CD4-positive, alpha-beta memory T cell (primary cell): ENCODE measurements at regions of chr1 and their contacts with region 1.

Region 1: DNA sequence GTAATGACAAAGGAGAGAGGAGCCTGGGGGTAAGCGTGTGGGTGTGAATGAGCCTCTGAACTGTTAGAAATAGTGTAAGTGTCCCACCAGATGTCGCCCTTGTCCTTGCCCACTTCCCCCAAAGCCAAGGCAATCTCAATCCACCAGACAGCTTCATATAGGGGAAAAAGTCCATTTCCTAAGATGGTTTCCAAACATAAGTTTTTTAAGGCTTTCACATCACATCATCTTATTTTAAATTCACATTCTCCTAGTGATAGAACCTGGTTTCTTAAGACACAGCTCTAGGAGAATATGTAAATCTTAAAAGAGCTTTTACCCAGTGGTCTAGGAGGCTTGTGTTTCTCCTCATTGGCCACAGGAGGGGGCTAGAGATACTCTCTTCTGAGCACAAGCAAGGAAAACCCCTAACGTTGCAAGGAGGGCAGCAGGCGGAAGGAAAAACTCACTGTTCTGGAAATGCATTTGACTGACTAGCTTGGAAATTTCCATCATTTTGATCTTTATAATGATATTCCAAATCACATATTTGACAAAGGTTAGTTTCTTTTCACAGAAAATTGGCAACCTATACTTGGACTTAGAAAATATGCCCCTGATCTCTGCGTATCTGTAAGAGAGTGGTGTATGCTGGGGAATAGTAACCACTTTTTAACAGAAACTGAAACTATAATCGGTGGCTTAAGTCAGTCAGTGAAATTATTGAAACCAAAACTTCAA is 51.9 kb upstream of the LPAR3 start:
- DNase-seq: peak; percentile 89 to 94 (median 91)
- H3K4me3 ChIP-seq: peak overlapping the region; percentile 55 to 82
- H3K4me3 Mint-ChIP-seq: peak overlapping the region; percentile 85 to 97 (median 90)
- H3K27ac ChIP-seq: peak overlapping the region; percentile 81
- H3K27ac Mint-ChIP-seq: peak overlapping the region; percentile 92 to 100 (median 97)
- H3K4me1 ChIP-seq: peaks cover 5% of the 10 kb centered on the region
- H3K4me1 Mint-ChIP-seq: peaks cover 5 to 15% (median 11%) of the 10 kb centered on the region in 4 donors
- H3K27me3 ChIP-seq: no peaks in the 10 kb centered on the region
- H3K27me3 Mint-ChIP-seq: no peaks in the 10 kb centered on the region

Region 2: DNA sequence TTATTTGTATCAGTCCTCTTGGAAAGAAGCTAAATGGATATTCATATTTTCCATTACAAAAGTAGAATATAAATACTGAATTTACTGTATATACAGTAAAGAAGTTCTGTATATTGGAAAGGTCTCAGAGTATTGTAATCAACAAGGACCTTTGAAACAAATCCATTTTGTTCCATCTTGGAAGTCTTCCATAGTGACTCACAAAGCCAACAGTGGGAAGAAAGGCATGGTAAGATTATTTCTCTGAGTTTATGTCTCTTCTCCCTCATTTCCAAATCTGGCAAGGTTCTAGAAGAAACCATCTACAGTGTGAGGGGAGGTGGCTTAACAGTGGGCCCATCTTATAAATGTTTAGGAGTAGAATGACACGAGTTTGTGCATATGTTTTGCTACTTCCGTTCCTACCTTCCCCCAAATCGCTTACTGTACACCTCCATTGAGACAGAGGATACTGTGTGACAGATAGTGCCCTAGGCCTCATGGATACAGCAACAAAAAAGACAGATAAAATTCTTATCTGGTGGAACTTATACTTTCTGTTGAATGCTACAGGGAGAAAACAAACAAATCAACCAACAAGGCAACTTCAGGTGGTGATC is 232.6 kb before region 1 on chr1:
- CTCF ChIA-PET with region 1: no interaction called
- POLR2A ChIA-PET with region 1: no interaction called
- intact Hi-C with region 1: no loop called
- DNase-seq: no peak
- H3K4me3 ChIP-seq: no peak overlapping the region
- H3K4me3 Mint-ChIP-seq: no peak overlapping the region
- H3K27ac ChIP-seq: no peak overlapping the region
- H3K27ac Mint-ChIP-seq: no peak overlapping the region
- H3K4me1 ChIP-seq: no peaks in the 10 kb centered on the region
- H3K4me1 Mint-ChIP-seq: peaks cover 0 to 2% (median 0%) of the 10 kb centered on the region in 4 donors
- H3K27me3 ChIP-seq: no peaks in the 10 kb centered on the region
- H3K27me3 Mint-ChIP-seq: peaks cover 0 to 7% of the 10 kb centered on the region in 2 donors

Region 3: DNA sequence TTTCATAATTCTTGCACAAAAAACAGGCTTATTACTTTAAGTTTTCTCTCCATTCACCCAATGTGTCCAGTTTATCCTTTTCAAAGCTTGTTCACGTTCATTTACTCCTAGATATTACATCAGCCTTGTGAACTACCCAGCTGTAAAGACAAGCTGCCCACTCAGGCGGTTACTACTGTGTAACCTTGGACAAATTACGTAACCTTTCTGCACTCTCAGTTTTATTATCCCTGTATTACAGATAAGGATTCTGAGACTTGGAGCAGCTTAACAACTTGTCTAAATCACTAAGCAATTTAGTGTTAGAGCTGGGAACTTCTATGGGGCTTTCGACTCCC is 31.4 kb before region 1 on chr1:
- CTCF ChIA-PET with region 1: no interaction called
- POLR2A ChIA-PET with region 1: no interaction called
- intact Hi-C with region 1: no loop called
- DNase-seq: no peak
- H3K4me3 ChIP-seq: no peak overlapping the region
- H3K4me3 Mint-ChIP-seq: no peak overlapping the region
- H3K27ac ChIP-seq: no peak overlapping the region
- H3K27ac Mint-ChIP-seq: no peak overlapping the region
- H3K4me1 ChIP-seq: no peaks in the 10 kb centered on the region
- H3K4me1 Mint-ChIP-seq: no peaks in the 10 kb centered on the region
- H3K27me3 ChIP-seq: no peaks in the 10 kb centered on the region
- H3K27me3 Mint-ChIP-seq: peaks cover 0 to 4% of the 10 kb centered on the region in 2 donors

Region 4: GRCh38 chr1:84959294-84959693 is 14.4 kb after region 1 on chr1:
- CTCF ChIA-PET with region 1: interaction called, 36 read pairs
- POLR2A ChIA-PET with region 1: interaction called, 3 read pairs
- intact Hi-C with region 1: no loop called
- DNase-seq: peak in 3 of 5 donors; percentile 9 to 58 (median 44)
- H3K4me3 ChIP-seq: no peak overlapping the region
- H3K4me3 Mint-ChIP-seq: no peak overlapping the region
- H3K27ac ChIP-seq: no peak overlapping the region
- H3K27ac Mint-ChIP-seq: peak overlapping the region in 3 of 7 donors; percentile 12 to 50 (median 31)
- H3K4me1 ChIP-seq: no peaks in the 10 kb centered on the region
- H3K4me1 Mint-ChIP-seq: peaks cover 3 to 6% (median 5%) of the 10 kb centered on the region in 4 donors
- H3K27me3 ChIP-seq: no peaks in the 10 kb centered on the region
- H3K27me3 Mint-ChIP-seq: peaks cover 0 to 2% of the 10 kb centered on the region in 2 donors

Region 5: DNA sequence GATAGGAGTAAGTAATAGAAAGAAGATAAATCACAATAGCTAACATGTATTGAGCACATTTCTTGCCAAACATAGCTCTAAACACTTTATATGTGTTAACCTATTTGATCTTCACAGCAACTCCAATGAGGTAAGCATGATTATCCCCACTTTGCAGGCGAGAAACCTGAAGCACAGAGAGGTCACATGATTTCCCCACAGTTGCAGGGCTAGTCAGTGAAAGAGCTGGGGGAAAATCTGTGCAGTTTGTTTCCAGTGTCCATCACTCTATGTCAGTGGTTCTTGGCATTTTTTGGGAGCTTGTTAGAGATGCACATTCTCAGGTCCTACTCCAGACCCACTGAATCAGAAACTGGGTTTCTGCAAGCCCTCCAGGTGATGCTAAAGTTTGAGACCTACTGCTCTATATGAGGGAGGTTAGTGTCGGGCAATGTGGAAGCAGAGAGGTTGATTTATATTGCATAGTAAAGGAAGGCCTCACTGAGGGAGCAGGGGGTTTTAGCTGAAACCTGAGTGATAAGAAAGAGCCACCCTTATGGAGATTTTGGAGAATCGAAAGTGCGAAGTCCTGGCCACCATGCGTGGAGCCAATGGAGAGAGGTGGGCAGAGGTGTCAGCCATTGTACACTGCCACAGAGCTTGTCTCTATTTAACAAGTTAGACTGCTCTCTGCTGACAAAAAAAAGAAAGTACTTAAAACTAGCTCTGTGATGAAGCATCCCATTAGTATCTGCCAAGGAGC is 82.5 kb after region 1 on chr1:
- CTCF ChIA-PET with region 1: interaction called, 176 read pairs
- POLR2A ChIA-PET with region 1: interaction called, 45 read pairs
- intact Hi-C with region 1: loop called (anchors 1 kb)
- DNase-seq: peak in 4 of 5 donors; percentile 38 to 47 (median 42)
- H3K4me3 ChIP-seq: no peak overlapping the region
- H3K4me3 Mint-ChIP-seq: peak overlapping the region; percentile 63 to 80 (median 74)
- H3K27ac ChIP-seq: peak overlapping the region; percentile 16
- H3K27ac Mint-ChIP-seq: peak overlapping the region; percentile 60 to 88 (median 79)
- H3K4me1 ChIP-seq: peaks cover 13% of the 10 kb centered on the region
- H3K4me1 Mint-ChIP-seq: peaks cover 6 to 11% (median 8%) of the 10 kb centered on the region in 4 donors
- H3K27me3 ChIP-seq: no peaks in the 10 kb centered on the region
- H3K27me3 Mint-ChIP-seq: no peaks in the 10 kb centered on the region

Region 6: DNA sequence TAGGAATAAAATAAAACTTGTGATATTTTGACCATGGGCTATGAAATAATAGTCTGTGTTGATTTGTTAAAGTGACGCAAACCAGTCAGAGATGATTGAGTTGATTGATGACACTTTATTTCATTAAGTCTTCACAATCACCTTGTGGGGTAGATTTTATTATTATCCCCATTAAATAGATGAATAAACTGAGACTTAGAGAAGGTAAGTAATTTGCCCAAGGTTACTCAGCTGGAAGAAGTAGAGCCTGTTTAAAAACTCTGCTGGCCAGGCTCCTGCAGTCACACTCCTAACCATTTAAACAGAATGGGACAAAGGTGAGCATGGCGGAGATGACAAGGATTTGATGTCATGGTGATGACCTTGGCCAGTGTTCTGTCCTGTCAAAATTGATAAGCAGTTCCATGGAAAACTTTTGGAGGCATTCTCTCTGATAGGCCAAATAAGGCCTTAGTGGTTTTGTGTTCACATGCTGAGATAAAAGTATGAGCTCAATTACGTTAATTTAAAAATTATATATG is 126.1 kb after region 1 on chr1:
- CTCF ChIA-PET with region 1: no interaction called
- POLR2A ChIA-PET with region 1: no interaction called
- intact Hi-C with region 1: no loop called
- DNase-seq: no peak
- H3K4me3 ChIP-seq: no peak overlapping the region
- H3K4me3 Mint-ChIP-seq: no peak overlapping the region
- H3K27ac ChIP-seq: no peak overlapping the region
- H3K27ac Mint-ChIP-seq: no peak overlapping the region
- H3K4me1 ChIP-seq: no peaks in the 10 kb centered on the region
- H3K4me1 Mint-ChIP-seq: peaks cover 4 to 5% (median 5%) of the 10 kb centered on the region in 4 donors
- H3K27me3 ChIP-seq: no peaks in the 10 kb centered on the region
- H3K27me3 Mint-ChIP-seq: peaks cover 0 to 10% of the 10 kb centered on the region in 2 donors

Region 7: GRCh38 chr1:85109475-85109874 is 164.5 kb after region 1 on chr1:
- CTCF ChIA-PET with region 1: interaction called, 6 read pairs
- POLR2A ChIA-PET with region 1: no interaction called
- intact Hi-C with region 1: loop called (anchors 2 kb)
- DNase-seq: peak in 4 of 5 donors; percentile 33 to 44 (median 41)
- H3K4me3 ChIP-seq: no peak overlapping the region
- H3K4me3 Mint-ChIP-seq: no peak overlapping the region
- H3K27ac ChIP-seq: no peak overlapping the region
- H3K27ac Mint-ChIP-seq: peak overlapping the region in 1 of 7 donors; percentile 59
- H3K4me1 ChIP-seq: no peaks in the 10 kb centered on the region
- H3K4me1 Mint-ChIP-seq: no peaks in the 10 kb centered on the region
- H3K27me3 ChIP-seq: no peaks in the 10 kb centered on the region
- H3K27me3 Mint-ChIP-seq: peaks cover 0 to 2% of the 10 kb centered on the region in 2 donors

Region 8: DNA sequence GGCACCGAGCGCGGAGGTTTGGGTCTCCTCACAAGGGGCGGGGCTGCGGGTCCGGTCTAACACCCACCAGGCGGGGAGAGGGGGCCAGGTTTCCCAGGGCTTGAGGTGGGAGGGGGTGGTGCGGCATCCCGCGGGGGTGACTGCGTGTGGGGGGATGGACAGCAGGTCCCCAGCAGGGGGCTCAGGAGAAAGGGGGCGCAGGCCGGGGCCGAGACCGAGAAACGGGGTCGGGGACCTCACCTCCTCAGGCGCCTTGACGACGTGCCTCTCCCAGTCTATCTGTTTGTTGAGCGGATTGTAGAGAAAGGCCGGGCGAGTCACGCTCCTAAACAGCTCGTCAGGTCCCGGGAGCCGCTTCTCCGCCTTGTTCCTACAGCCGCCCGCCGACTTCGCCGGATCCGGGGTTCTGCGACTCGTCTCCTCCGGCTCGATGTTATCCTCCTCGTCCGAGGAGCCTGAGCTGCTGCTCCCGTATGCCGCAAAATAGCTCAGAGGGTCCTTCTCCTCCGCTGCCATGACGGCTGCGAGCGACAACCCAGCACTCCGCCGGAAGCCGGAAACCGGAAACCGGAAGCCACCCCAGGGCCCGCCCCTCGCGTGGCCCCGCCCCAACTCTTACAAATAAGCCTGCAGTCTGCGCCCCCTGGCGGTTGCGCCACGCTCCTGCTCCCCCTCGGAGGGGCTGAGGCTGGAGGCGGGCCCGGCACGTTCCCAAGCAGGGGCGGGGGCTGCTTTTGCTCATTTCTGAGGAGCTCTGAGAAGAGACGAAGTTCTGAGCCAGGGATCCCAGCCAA is 314.4 kb after region 1 on chr1 and contains the start of gene C1orf52:
- CTCF ChIA-PET with region 1: interaction called, 282 read pairs
- POLR2A ChIA-PET with region 1: interaction called, 29 read pairs
- intact Hi-C with region 1: loop called (anchors 1 kb)
- DNase-seq: peak; percentile 93 to 96 (median 95)
- H3K4me3 ChIP-seq: peak within 1 kb of the TSS; percentile 85 to 95
- H3K4me3 Mint-ChIP-seq: peak within 1 kb of the TSS; percentile 98 to 99 (median 98)
- H3K27ac ChIP-seq: peak within 1 kb of the TSS; percentile 80
- H3K27ac Mint-ChIP-seq: peak within 1 kb of the TSS; percentile 94 to 98 (median 97)
- H3K4me1 ChIP-seq: peaks cover 35% of the 10 kb centered on the region
- H3K4me1 Mint-ChIP-seq: peaks cover 27 to 56% (median 41%) of the 10 kb centered on the region in 4 donors
- H3K27me3 ChIP-seq: no peaks in the 10 kb centered on the region
- H3K27me3 Mint-ChIP-seq: no peaks in the 10 kb centered on the region
- total RNA-seq, gene C1orf52: 39.6 to 41.6 TPM

Region 9: GRCh38 chr1:86018283-86018923 is 1073.5 kb after region 1 on chr1:
- CTCF ChIA-PET with region 1: interaction called, 4 read pairs
- POLR2A ChIA-PET with region 1: no interaction called
- intact Hi-C with region 1: loop called (anchors 10 kb)
- DNase-seq: peak in 2 of 5 donors; percentile 4 to 7
- H3K4me3 ChIP-seq: no peak overlapping the region
- H3K4me3 Mint-ChIP-seq: no peak overlapping the region
- H3K27ac ChIP-seq: no peak overlapping the region
- H3K27ac Mint-ChIP-seq: no peak overlapping the region
- H3K4me1 ChIP-seq: no peaks in the 10 kb centered on the region
- H3K4me1 Mint-ChIP-seq: no peaks in the 10 kb centered on the region
- H3K27me3 ChIP-seq: no peaks in the 10 kb centered on the region
- H3K27me3 Mint-ChIP-seq: peaks cover 0 to 1% of the 10 kb centered on the region in 2 donors